ENCODE measurements at regions of chr13 and their contacts with region 1.

Region 1: DNA sequence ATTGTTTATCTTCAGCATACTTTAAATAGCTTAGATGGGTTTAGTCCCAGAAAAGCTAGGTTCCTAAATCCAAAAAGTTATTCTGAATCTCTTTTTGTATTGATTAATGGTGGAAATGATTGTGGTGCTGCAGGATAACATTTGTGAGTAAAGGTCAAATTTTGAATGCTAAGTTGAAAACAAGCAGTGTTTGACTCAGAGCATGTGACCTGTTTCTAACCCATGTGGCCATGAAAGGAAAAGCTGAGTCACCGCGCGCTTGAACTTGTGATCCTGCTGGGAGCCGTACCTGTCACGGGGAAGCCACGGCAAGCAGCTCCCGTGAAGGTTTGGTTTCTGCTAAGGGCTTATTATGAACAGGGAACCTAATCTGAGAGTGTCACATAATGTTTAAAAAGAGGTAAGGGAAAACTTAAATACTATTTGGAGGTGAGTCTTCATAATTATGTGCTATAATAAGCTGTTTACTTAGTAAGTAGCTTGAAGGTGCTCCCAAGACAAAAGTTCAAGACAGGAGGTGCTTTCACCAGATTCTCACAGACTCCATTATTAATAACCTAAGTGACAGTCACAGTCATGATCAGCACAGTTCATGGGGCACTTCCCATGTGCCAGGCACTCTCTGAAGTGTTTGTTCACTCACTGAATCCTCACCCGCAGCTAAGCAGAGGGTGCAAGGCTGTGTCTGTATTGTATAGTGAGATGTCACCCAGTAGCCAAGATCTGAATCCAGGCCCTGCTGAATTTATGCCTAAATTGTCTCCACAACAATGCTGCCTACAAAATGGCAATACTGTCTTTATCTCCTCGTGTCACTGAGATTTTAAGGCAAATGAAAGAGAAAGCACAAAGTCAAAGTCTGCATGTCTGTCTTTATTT is 286.5 kb downstream of the MYO16 start:
- DNase-seq: peak; percentile 72
- H3K4me3 Mint-ChIP-seq: peak overlapping the region; percentile 80
- H3K27ac Mint-ChIP-seq: peak overlapping the region; percentile 97
- H3K4me1 Mint-ChIP-seq: peaks cover 30% of the 10 kb centered on the region
- H3K27me3 Mint-ChIP-seq: peaks cover 2% of the 10 kb centered on the region

Region 2: DNA sequence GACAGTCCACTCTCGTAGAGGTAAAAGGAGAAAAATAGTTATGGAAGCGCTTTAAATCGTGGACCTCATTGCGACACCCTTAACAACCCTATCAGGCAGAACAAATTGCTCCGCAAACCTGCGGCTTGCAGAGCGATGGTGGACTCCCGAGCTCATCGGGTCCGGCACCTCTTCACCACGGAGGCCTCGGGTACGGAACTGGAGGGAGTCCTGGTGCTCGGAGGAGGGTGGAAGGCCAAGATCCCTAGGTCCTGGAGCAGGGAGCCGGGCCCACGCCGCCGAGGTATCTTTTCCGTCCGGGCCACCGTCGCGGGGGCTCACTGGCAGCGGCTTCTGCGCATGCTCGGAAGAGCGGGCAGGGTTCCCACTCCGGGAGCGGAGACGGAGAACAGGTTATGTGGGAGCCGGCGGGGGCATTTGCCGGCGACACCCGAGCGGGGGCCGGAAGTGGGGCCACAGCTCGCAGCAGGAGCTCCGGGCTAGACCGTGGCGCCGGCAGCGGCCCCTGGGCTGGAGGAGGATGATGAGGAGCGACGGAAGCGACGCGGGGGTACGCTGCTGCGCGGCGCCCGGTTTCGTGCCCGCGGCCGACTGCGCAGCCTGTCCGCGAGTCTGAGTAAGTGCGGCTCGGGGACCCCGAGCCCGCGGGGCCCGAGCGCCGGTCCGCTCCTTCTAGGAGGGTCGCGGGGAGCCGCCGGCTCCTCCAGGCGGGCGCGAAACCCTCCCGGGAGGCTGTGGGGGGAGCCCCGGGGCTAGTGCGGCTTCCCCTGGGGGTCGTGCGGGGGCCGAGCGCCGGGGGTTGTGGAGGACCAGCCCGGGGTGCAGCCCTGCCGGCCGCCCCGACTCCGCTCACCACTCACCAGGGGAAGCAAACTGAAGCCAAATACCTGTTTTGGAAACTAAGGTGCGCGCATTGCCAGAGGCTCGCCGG is 697.6 kb before region 1 on chr13 and contains the start of gene ABHD13:
- intact Hi-C with region 1: loop called (anchors 1 kb)
- DNase-seq: peak; percentile 89
- H3K4me3 Mint-ChIP-seq: peak within 1 kb of the TSS; percentile 95
- H3K27ac Mint-ChIP-seq: peak within 1 kb of the TSS; percentile 94
- H3K4me1 Mint-ChIP-seq: peaks cover 44% of the 10 kb centered on the region
- H3K27me3 Mint-ChIP-seq: peaks cover 2% of the 10 kb centered on the region
- total RNA-seq, gene ABHD13: 8.0 and 8.5 TPM in 2 replicates

Region 3: GRCh38 chr13:108961542-108962125 is 45.8 kb after region 1 on chr13:
- intact Hi-C with region 1: loop called (anchors 5 kb)
- DNase-seq: no peak
- H3K4me3 Mint-ChIP-seq: no peak overlapping the region
- H3K27ac Mint-ChIP-seq: no peak overlapping the region
- H3K4me1 Mint-ChIP-seq: peaks cover 4% of the 10 kb centered on the region
- H3K27me3 Mint-ChIP-seq: peaks cover 4% of the 10 kb centered on the region

Region 4: DNA sequence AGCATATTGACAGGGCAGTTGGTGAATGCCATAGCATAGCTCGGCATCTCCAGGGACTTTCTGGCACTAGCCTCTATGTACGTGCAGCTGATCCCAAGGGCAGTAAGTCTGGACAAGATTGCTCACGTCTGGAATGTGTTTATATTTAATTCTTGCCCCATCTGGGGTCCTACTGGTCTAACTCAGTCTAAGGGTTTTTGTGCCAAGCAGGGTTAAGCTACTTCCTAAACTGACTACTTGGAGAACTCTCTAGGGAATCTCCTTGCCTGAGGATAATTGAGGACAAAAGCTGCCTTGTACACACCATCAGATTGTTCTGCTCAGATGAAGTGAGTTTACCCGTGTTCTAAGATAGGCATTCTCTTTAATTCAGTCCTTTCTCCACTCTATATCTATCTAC is 71.6 kb after region 1 on chr13:
- intact Hi-C with region 1: no loop called
- DNase-seq: no peak
- H3K4me3 Mint-ChIP-seq: no peak overlapping the region
- H3K27ac Mint-ChIP-seq: no peak overlapping the region
- H3K4me1 Mint-ChIP-seq: no peaks in the 10 kb centered on the region
- H3K27me3 Mint-ChIP-seq: peaks cover 5% of the 10 kb centered on the region

Region 5: DNA sequence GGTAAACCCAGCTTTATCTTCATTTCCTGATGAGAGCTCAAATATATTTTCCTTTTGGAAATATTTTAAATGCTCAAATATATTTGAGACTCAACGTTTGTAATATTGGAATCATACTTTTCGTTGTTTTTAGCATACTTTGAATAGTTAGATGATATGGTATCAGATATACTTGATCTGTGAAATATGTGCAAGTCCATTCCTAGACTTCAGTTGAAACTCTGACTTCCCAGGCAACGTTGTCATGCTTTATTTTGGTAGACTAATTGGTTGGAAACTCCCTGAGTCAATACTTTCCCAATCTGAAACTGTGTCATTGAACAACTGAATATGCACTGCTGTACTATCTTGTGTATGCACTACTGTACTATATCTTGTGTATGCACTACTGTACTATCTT is 92.1 kb after region 1 on chr13:
- intact Hi-C with region 1: no loop called
- DNase-seq: no peak
- H3K4me3 Mint-ChIP-seq: no peak overlapping the region
- H3K27ac Mint-ChIP-seq: no peak overlapping the region
- H3K4me1 Mint-ChIP-seq: no peaks in the 10 kb centered on the region
- H3K27me3 Mint-ChIP-seq: no peaks in the 10 kb centered on the region

Region 6: DNA sequence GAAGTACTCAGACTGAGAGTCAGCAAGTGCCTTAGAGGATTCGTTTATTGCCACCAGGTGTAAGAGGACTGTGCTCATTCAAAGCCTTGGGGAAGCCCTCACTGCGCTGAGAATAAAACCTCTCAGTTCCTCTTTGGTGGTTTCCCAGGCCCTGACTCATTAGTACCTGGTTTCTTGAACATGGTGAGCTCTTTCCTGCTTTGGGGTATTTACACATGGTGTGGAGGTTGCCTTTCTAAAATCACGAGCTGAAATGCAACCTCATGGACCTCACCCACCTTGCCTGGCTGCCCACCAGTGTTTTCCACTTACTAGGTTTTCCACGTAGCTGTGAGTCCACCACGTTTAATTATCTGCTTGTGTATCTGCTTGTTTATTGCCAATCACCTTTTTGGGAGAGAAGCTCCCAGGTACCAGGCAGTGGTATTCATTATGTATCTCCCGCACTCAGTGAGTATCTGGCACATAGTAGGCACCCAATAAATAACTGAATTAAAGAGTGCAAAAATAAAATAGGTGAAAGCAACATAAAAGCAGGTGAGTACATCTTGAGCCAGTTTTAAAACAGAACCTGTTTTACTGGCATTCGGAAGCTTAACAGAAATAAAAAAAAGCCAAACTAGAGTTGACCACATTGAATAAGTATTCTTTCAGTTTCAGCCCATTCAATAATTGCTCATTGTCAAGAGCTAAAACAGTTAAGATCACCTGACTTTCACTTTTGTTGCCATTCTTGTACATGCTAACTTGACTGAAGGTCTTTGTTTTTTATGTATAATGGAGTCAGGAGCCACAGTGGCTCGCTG is 246.6 kb after region 1 on chr13:
- intact Hi-C with region 1: loop called (anchors 10 kb)
- DNase-seq: peak; percentile 44
- H3K4me3 Mint-ChIP-seq: peak overlapping the region; percentile 1
- H3K27ac Mint-ChIP-seq: peak overlapping the region; percentile 6
- H3K4me1 Mint-ChIP-seq: peaks cover 34% of the 10 kb centered on the region
- H3K27me3 Mint-ChIP-seq: peaks cover 12% of the 10 kb centered on the region

Region 7: GRCh38 chr13:110138010-110138699 is 1222.3 kb after region 1 on chr13:
- intact Hi-C with region 1: loop called (anchors 2 kb)
- DNase-seq: peak; percentile 59
- H3K4me3 Mint-ChIP-seq: peak overlapping the region; percentile 73
- H3K27ac Mint-ChIP-seq: peak overlapping the region; percentile 73
- H3K4me1 Mint-ChIP-seq: peaks cover 10% of the 10 kb centered on the region
- H3K27me3 Mint-ChIP-seq: peaks cover 41% of the 10 kb centered on the region